PC-9 (cell line): ENCODE measurements at regions of chr2 and their contacts with region 1.

Region 1: DNA sequence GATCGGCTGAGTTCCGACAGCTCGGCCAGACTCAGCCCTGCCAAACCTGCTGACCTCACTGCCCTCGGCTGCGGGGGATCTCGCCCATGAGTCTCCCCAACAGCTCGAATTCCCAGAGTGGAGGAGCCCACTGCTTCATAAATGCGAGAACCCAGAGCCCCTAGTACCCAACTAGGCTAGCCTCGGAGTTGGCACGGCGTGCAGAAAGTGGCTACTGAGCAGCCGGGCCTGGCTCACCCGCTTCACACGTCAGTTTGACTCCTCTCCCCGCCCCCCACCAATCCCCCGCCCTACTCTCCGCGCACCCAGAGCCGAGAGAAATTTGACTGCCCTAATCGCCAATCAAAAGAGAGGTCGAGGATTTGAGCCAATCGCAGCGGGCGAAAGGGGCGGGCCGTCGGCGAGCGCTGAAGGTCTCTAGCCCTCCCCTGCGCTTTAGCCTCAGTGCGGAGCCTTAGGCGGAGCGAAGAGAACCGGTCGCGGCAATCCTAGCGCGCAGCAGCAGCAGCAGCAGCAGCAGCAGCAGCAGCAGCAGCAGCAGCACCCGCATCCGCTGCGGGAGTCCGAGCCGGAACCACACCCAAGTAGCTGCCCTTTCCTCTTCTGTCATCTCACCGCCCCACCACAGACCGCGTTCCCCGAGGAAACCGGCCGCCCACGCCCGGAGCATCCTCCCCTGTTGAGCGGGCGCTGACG is at the start of gene GLS:
- DNase-seq: peak; percentile 89
- H3K4me3 ChIP-seq: peak within 1 kb of the TSS; percentile 93
- H3K27ac ChIP-seq: peak within 1 kb of the TSS; percentile 80
- H3K4me1 ChIP-seq: peaks cover 31% of the 10 kb centered on the region
- H3K27me3 ChIP-seq: no peaks in the 10 kb centered on the region
- CTCF ChIP-seq: no peak
- total RNA-seq, gene GLS: 66.4 and 68.5 TPM in 2 replicates

Region 2: GRCh38 chr2:190736355-190736754 is 144.2 kb before region 1 on chr2:
- CTCF ChIA-PET with region 1: no interaction called
- POLR2A ChIA-PET with region 1: no interaction called
- intact Hi-C with region 1: no loop called
- DNase-seq: no peak
- H3K4me3 ChIP-seq: no peak overlapping the region
- H3K27ac ChIP-seq: no peak overlapping the region
- H3K4me1 ChIP-seq: no peaks in the 10 kb centered on the region
- H3K27me3 ChIP-seq: no peaks in the 10 kb centered on the region
- CTCF ChIP-seq: no peak

Region 3: GRCh38 chr2:190771726-190772125 is 108.8 kb before region 1 on chr2:
- CTCF ChIA-PET with region 1: no interaction called
- POLR2A ChIA-PET with region 1: no interaction called
- intact Hi-C with region 1: no loop called
- DNase-seq: no peak
- H3K4me3 ChIP-seq: no peak overlapping the region
- H3K27ac ChIP-seq: no peak overlapping the region
- H3K4me1 ChIP-seq: no peaks in the 10 kb centered on the region
- H3K27me3 ChIP-seq: no peaks in the 10 kb centered on the region
- CTCF ChIP-seq: no peak

Region 4: GRCh38 chr2:190835303-190835930 is 45.1 kb before region 1 on chr2:
- CTCF ChIA-PET with region 1: no interaction called
- POLR2A ChIA-PET with region 1: no interaction called
- intact Hi-C with region 1: loop called (anchors 2 kb)
- DNase-seq: peak in 1 of 2 experiments; percentile 49
- H3K4me3 ChIP-seq: no peak overlapping the region
- H3K27ac ChIP-seq: no peak overlapping the region
- H3K4me1 ChIP-seq: peaks cover 45% of the 10 kb centered on the region
- H3K27me3 ChIP-seq: no peaks in the 10 kb centered on the region
- CTCF ChIP-seq: no peak

Region 5: GRCh38 chr2:190843874-190844699 is 36.4 kb before region 1 on chr2:
- CTCF ChIA-PET with region 1: no interaction called
- POLR2A ChIA-PET with region 1: no interaction called
- intact Hi-C with region 1: loop called (anchors 2 kb)
- DNase-seq: peak; percentile 35 to 90
- H3K4me3 ChIP-seq: peak overlapping the region; percentile 55; the same call in 1 of the 2 replicates
- H3K27ac ChIP-seq: peak overlapping the region; percentile 100
- H3K4me1 ChIP-seq: peaks cover 87% of the 10 kb centered on the region
- H3K27me3 ChIP-seq: no peaks in the 10 kb centered on the region
- CTCF ChIP-seq: no peak

Region 6: GRCh38 chr2:190858817-190859216 is 21.7 kb before region 1 on chr2:
- CTCF ChIA-PET with region 1: no interaction called
- POLR2A ChIA-PET with region 1: interaction called, 12 read pairs
- intact Hi-C with region 1: no loop called
- DNase-seq: peak; percentile 4 to 50
- H3K4me3 ChIP-seq: no peak overlapping the region
- H3K27ac ChIP-seq: peak overlapping the region; percentile 67
- H3K4me1 ChIP-seq: peaks cover 26% of the 10 kb centered on the region
- H3K27me3 ChIP-seq: no peaks in the 10 kb centered on the region
- CTCF ChIP-seq: no peak

Region 7: GRCh38 chr2:190947711-190948251 is 67.3 kb after region 1 on chr2:
- CTCF ChIA-PET with region 1: no interaction called
- POLR2A ChIA-PET with region 1: interaction called, 3 read pairs
- intact Hi-C with region 1: loop called (anchors 1 kb)
- DNase-seq: peak; percentile 35 to 75
- H3K4me3 ChIP-seq: no peak overlapping the region
- H3K27ac ChIP-seq: peak overlapping the region; percentile 46
- H3K4me1 ChIP-seq: peaks cover 33% of the 10 kb centered on the region
- H3K27me3 ChIP-seq: no peaks in the 10 kb centered on the region
- CTCF ChIP-seq: no peak

Region 8: GRCh38 chr2:190979906-190980629 is 99.5 kb after region 1 on chr2:
- CTCF ChIA-PET with region 1: no interaction called
- POLR2A ChIA-PET with region 1: no interaction called
- intact Hi-C with region 1: loop called (anchors 1 kb)
- DNase-seq: peak; percentile 90 to 94
- H3K4me3 ChIP-seq: peak overlapping the region; percentile 28; the same call in 1 of the 2 replicates
- H3K27ac ChIP-seq: peak overlapping the region; percentile 55
- H3K4me1 ChIP-seq: peaks cover 40% of the 10 kb centered on the region
- H3K27me3 ChIP-seq: no peaks in the 10 kb centered on the region
- CTCF ChIP-seq: no peak